Naive thymus-derived CD4-positive, alpha-beta T cell (primary cell): ENCODE measurements at regions of chr2 and their contacts with region 1.

Region 1: GRCh38 chr2:199979832-199980628 is 24.6 kb downstream of the MAIP1 start:
- DNase-seq: peak; percentile 42 to 79 (median 71)
- ATAC-seq: peak; percentile 85
- H3K4me3 ChIP-seq: no peak overlapping the region
- H3K4me3 Mint-ChIP-seq: peak overlapping the region in 1 of 10 donors; percentile 39
- H3K27ac ChIP-seq: no peak overlapping the region
- H3K27ac Mint-ChIP-seq: no peak overlapping the region
- H3K4me1 ChIP-seq: no peaks in the 10 kb centered on the region
- H3K4me1 Mint-ChIP-seq: peaks cover 0 to 22% (median 0%) of the 10 kb centered on the region in 7 donors
- H3K27me3 ChIP-seq: no peaks in the 10 kb centered on the region
- H3K27me3 Mint-ChIP-seq: peaks cover 0 to 2% (median 0%) of the 10 kb centered on the region in 5 donors

Region 2: GRCh38 chr2:200225951-200226350 is 245.9 kb after region 1 on chr2:
- CTCF ChIA-PET with region 1: no interaction called
- POLR2A ChIA-PET with region 1: no interaction called
- intact Hi-C with region 1: no loop called
- DNase-seq: no peak
- ATAC-seq: no peak
- H3K4me3 ChIP-seq: no peak overlapping the region
- H3K4me3 Mint-ChIP-seq: no peak overlapping the region
- H3K27ac ChIP-seq: no peak overlapping the region
- H3K27ac Mint-ChIP-seq: no peak overlapping the region
- H3K4me1 ChIP-seq: no peaks in the 10 kb centered on the region
- H3K4me1 Mint-ChIP-seq: peaks cover 0 to 4% (median 0%) of the 10 kb centered on the region in 7 donors
- H3K27me3 ChIP-seq: no peaks in the 10 kb centered on the region
- H3K27me3 Mint-ChIP-seq: peaks cover 6 to 30% (median 16%) of the 10 kb centered on the region in 5 donors

Region 3: DNA sequence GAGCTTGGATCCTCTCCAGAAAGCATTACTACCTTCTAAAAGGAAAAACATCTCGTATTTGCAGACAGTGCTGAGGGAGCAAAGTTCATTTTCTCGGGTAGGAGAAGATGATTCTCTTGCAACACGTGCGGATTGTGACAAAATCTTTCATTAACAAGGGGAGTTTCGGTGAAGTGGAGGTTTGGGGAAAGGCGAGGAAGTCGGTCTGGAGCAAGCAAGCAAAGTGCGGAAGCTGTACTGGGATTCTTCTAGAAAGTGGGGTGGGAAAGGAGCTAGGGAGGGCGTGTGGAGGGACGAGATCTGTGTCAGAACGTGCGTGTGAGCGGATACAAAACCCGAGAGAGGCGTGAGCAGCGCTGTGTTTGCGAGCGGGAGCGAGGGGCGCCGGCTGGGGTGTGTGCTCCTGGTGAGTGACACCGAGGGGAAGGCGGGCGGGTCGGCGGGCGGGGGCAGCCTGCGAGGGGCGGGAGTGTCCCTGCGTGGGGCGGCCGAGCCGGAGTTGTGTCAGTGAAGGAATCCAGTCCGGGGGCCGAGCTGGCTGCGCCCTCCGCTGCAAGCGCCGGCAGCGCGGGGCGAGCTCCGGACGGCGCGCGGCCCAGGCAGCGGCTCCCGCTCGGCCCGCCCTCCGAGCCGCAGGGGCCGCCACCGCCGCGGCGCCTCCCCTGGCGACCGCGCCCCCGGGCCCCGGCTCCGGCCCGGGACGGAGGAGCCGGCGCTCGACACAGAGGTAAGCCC is 326.3 kb after region 1 on chr2 and contains the start of gene SPATS2L:
- CTCF ChIA-PET with region 1: no interaction called
- POLR2A ChIA-PET with region 1: no interaction called
- intact Hi-C with region 1: loop called (anchors 2 to 5 kb)
- DNase-seq: peak in 7 of 9 donors; percentile 12 to 36 (median 22)
- ATAC-seq: peak; percentile 58
- H3K4me3 ChIP-seq: peak within 1 kb of the TSS; percentile 63
- H3K4me3 Mint-ChIP-seq: peak within 1 kb of the TSS; percentile 86 to 96 (median 92)
- H3K27ac ChIP-seq: no peak within 1 kb of the TSS
- H3K27ac Mint-ChIP-seq: peak within 1 kb of the TSS in 7 of 9 donors; percentile 14 to 88 (median 63)
- H3K4me1 ChIP-seq: peaks cover 0 to 4% of the 10 kb centered on the region in 2 donors
- H3K4me1 Mint-ChIP-seq: peaks cover 7 to 32% (median 11%) of the 10 kb centered on the region in 7 donors
- H3K27me3 ChIP-seq: no peaks in the 10 kb centered on the region
- H3K27me3 Mint-ChIP-seq: peaks cover 0 to 58% (median 16%) of the 10 kb centered on the region in 5 donors
- total RNA-seq, gene SPATS2L: 2.3 to 51.9 (median 3.5) TPM

Region 4: DNA sequence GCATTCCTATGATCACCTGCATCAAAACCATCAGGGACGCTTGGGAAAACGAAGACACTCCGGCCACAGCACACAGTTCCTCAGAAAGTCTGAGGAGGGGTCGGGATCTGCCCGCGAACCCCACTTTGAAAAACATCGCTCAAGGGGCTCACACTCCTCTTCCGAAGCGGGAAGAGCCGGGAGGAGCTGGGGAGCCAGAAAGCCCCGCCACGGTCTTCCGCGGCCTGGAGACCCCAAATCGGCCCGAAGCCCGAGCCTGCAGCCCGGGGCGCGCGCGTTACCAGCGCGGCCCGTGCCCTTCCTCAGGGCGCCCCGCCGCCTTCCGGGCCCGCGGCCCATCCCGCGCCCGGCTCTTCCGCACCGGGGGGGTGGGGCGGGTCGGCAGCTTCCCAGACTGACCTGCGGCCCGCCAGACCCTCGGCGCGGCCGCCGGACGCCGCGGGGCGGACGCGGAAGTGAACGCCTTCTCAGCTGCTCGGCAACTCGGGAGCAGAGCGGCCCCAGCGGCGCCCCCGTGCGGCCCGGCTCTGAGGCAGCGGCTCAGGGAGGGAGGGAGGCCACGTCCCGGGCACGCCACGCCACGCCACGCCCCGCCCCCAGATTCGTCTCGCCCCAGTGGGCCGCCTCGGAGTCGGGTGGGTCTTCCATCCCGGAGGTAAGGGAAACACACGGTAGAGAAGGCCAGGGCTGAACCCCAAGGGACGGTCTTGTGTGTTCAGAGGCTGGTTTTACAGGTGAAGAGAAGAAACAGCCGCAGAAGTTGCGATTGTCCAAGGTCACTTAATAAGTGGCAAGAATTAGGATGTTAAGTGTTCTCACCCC is 529.8 kb after region 1 on chr2 and contains the start of gene KCTD18:
- CTCF ChIA-PET with region 1: no interaction called
- POLR2A ChIA-PET with region 1: no interaction called
- intact Hi-C with region 1: loop called in 1 of 2 experiments (anchors 1 kb)
- DNase-seq: peak; percentile 82 to 93 (median 87)
- ATAC-seq: peak; percentile 100
- H3K4me3 ChIP-seq: peak within 1 kb of the TSS; percentile 53
- H3K4me3 Mint-ChIP-seq: peak within 1 kb of the TSS; percentile 83 to 98 (median 94)
- H3K27ac ChIP-seq: peak within 1 kb of the TSS; percentile 74
- H3K27ac Mint-ChIP-seq: peak within 1 kb of the TSS; percentile 88 to 97 (median 95)
- H3K4me1 ChIP-seq: peaks cover 6 to 22% of the 10 kb centered on the region in 2 donors
- H3K4me1 Mint-ChIP-seq: peaks cover 10 to 51% (median 34%) of the 10 kb centered on the region in 7 donors
- H3K27me3 ChIP-seq: no peaks in the 10 kb centered on the region
- H3K27me3 Mint-ChIP-seq: no peaks in the 10 kb centered on the region
- total RNA-seq, gene KCTD18: 14.9 to 20.8 (median 18.6) TPM

Region 5: GRCh38 chr2:200703127-200703925 is 723.3 kb after region 1 on chr2:
- CTCF ChIA-PET with region 1: no interaction called
- POLR2A ChIA-PET with region 1: no interaction called
- intact Hi-C with region 1: loop called (anchors 1 kb)
- DNase-seq: peak in 4 of 9 donors; percentile 9 to 35 (median 28)
- ATAC-seq: peak; percentile 6
- H3K4me3 ChIP-seq: no peak overlapping the region
- H3K4me3 Mint-ChIP-seq: peak overlapping the region in 1 of 10 donors; percentile 22
- H3K27ac ChIP-seq: no peak overlapping the region
- H3K27ac Mint-ChIP-seq: peak overlapping the region in 3 of 9 donors; percentile 5 to 68 (median 8)
- H3K4me1 ChIP-seq: no peaks in the 10 kb centered on the region
- H3K4me1 Mint-ChIP-seq: peaks cover 0 to 28% (median 4%) of the 10 kb centered on the region in 7 donors
- H3K27me3 ChIP-seq: no peaks in the 10 kb centered on the region
- H3K27me3 Mint-ChIP-seq: peaks cover 0 to 5% (median 2%) of the 10 kb centered on the region in 5 donors

Region 6: GRCh38 chr2:201176081-201176481 is 1196.1 kb after region 1 on chr2:
- CTCF ChIA-PET with region 1: no interaction called
- POLR2A ChIA-PET with region 1: no interaction called
- intact Hi-C with region 1: loop called in 1 of 2 experiments (anchors 5 kb)
- DNase-seq: no peak
- ATAC-seq: no peak
- H3K4me3 ChIP-seq: no peak overlapping the region
- H3K4me3 Mint-ChIP-seq: no peak overlapping the region
- H3K27ac ChIP-seq: no peak overlapping the region
- H3K27ac Mint-ChIP-seq: peak overlapping the region in 2 of 9 donors; percentile 41 to 47
- H3K4me1 ChIP-seq: peaks cover 0 to 2% of the 10 kb centered on the region in 2 donors
- H3K4me1 Mint-ChIP-seq: peaks cover 5 to 26% (median 12%) of the 10 kb centered on the region in 7 donors
- H3K27me3 ChIP-seq: no peaks in the 10 kb centered on the region
- H3K27me3 Mint-ChIP-seq: no peaks in the 10 kb centered on the region